Activated B cell treated with CpG ODN at 0.5 μM for 24 hours (primary cell): ENCODE measurements at regions of chr1 and their contacts with region 1.

Region 1: DNA sequence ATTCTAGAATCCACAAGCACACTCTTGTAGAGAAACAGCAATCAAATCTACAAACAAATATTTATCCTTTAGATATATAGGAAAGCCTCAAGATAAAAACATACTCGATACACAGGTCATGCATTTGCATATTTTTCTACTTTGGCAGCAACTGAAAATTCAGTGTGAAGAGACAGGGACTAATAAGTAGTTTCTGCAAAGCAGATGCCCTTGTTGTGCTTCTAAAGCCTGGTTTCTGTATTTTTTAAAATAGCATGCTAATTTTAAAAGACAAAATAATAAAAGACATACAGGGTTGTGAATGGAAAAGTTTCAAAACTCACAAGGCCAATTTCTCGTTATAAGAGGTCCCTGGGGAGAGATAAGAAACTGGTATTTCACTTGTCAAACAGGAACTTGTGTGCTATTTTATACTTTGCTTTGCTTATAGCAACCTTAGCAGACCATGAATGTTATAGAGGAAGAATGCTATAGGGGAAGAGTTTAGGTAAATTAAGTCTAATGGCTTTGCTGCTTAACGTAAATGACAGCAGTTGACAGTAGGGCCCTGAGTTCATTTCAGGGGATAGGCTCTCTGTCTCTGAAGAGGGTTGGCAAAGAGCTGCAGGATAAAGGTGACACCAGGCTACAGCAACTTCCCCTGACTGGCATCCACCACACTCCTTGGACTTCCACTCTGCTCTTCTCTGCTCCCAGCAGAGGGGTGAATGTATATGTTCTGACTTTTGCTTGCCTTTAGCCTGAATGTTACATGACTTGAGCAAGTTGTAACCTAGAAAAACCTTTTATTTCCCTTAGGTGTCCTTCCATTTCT is 9.4 kb upstream of the RGS13 start:
- DNase-seq: no peak
- ATAC-seq: peak; percentile 90
- H3K4me3 Mint-ChIP-seq: peak overlapping the region; percentile 44
- H3K27ac Mint-ChIP-seq: no peak overlapping the region
- H3K4me1 Mint-ChIP-seq: peaks cover 19% of the 10 kb centered on the region
- H3K27me3 Mint-ChIP-seq: peaks cover 65% of the 10 kb centered on the region
- CTCF ChIP-seq: no peak

Region 2: DNA sequence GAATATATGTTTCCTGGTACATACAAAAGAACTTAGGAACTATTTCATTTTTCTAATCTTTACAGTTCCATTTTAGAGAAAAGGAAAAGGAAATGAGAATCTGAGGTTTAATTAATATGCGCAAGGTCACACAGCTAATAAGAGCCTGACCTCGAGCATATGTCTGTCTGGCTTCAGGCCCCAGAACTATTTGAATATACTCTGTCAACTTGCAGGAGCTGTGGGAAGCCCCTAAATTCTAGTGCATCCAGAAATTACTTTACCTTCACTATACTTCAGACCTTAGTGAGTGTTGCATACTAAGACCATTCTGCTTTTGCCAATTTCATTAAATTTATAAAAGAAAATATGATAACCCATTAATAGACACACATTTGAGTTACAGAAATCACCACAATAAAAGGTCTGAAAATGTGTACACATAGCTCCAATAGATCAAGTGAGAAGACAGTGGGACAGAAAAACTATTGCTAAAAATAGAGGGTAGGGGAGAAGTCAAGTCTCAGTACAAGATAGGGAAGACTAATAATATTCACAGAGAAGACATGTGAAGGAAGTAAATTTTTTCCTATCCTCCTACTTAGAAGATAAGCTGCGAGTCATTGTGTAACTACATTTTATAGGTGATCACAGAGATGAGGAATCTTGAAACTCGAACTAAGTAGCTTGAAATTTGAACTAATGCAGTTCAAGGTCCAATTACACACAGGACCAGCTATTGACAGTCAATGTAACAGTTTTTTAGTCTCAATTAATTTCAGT is 13.2 kb after region 1 on chr1:
- CTCF ChIA-PET with region 1: no interaction called
- POLR2A ChIA-PET with region 1: no interaction called
- intact Hi-C with region 1: loop called (anchors 1 kb)
- DNase-seq: no peak
- ATAC-seq: peak; percentile 84
- H3K4me3 Mint-ChIP-seq: no peak overlapping the region
- H3K27ac Mint-ChIP-seq: peak overlapping the region; percentile 13
- H3K4me1 Mint-ChIP-seq: peaks cover 7% of the 10 kb centered on the region
- H3K27me3 Mint-ChIP-seq: peaks cover 23% of the 10 kb centered on the region
- CTCF ChIP-seq: no peak

Region 3: GRCh38 chr1:192941722-192942411 is 315.3 kb after region 1 on chr1:
- CTCF ChIA-PET with region 1: no interaction called
- POLR2A ChIA-PET with region 1: no interaction called
- intact Hi-C with region 1: loop called (anchors 10 kb)
- DNase-seq: no peak
- ATAC-seq: peak; percentile 62
- H3K4me3 Mint-ChIP-seq: no peak overlapping the region
- H3K27ac Mint-ChIP-seq: peak overlapping the region; percentile 77
- H3K4me1 Mint-ChIP-seq: peaks cover 10% of the 10 kb centered on the region
- H3K27me3 Mint-ChIP-seq: no peaks in the 10 kb centered on the region
- CTCF ChIP-seq: no peak